ENCODE measurements at regions of chr22 and their contacts with region 1.

Region 1: GRCh38 chr22:39170825-39171622 is 18.5 kb upstream of the CBX7 start:
- DNase-seq: no peak
- H3K4me3 ChIP-seq: peak overlapping the region in 2 of 4 donors; percentile 12 to 28
- H3K27ac ChIP-seq: peak overlapping the region in 2 of 4 donors; percentile 6 to 44
- H3K4me1 ChIP-seq: peaks cover 52 to 57% (median 56%) of the 10 kb centered on the region in 4 donors
- H3K27me3 ChIP-seq: peaks cover 0 to 11% (median 0%) of the 10 kb centered on the region in 4 donors
- CTCF ChIP-seq: peak in 2 of 3 experiments; percentile 98
- EP300 ChIP-seq: no peak
- POLR2A ChIP-seq: no peak

Region 2: DNA sequence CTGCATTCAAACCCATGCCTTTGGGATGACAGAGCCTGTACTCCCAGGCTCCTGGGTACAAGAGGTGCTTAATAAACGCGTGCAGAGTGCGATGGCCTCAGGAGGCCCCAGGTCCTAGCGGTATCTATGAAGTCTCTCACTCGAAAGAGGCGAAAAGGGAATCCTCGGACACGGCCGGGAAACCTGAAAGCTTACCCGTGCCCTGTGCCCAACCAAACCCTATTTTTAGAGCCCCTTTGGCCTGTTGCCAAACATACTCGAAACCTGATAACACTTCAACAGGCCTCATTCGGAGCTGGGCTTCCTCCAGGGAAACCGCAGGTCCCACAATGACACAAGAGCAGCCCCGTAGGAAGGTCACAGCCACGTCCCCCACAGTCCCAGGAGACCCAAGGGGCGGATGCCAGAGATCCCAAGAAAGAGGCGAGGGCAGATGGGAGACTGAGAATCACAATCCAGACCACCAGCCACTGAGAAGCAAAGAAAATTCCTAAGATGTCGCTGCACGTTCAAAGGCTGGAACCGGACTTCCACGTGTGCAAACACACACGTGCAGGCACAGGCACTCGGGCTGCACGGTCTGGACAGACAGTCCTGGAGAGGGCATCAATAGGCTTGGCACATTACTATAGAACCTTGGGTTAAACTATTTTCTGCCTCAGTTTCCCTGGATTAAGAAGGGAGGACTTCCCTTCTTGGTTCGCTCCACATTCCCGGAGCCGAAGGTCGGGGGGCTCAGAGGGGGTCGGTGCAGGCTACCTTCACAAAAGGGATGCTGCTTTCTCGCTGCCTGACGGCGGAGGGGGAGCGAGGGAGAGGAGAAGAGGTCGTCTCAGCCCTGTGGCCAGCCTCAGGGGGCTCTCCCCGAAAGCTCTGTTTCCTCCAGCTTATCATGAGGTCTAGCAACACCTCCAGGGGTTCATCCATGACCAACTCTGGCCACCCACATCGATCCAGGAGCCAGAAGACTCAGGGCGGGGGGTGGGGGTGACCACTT is 65.6 kb after region 1 on chr22:
- intact Hi-C with region 1: no loop called
- DNase-seq: no peak
- H3K4me3 ChIP-seq: no peak overlapping the region
- H3K27ac ChIP-seq: peak overlapping the region; percentile 60 to 80 (median 70)
- H3K4me1 ChIP-seq: peaks cover 86 to 95% (median 90%) of the 10 kb centered on the region in 4 donors
- H3K27me3 ChIP-seq: peaks cover 0 to 44% (median 0%) of the 10 kb centered on the region in 4 donors
- CTCF ChIP-seq: no peak
- EP300 ChIP-seq: no peak
- POLR2A ChIP-seq: no peak

Region 3: GRCh38 chr22:39253435-39254070 is 82.5 kb after region 1 on chr22:
- intact Hi-C with region 1: loop called (anchors 5 kb)
- DNase-seq: peak; percentile 93
- H3K4me3 ChIP-seq: peak overlapping the region in 3 of 4 donors; percentile 14 to 25 (median 17)
- H3K27ac ChIP-seq: peak overlapping the region; percentile 33 to 74 (median 67)
- H3K4me1 ChIP-seq: peaks cover 32 to 44% (median 39%) of the 10 kb centered on the region in 4 donors
- H3K27me3 ChIP-seq: peaks cover 0 to 18% (median 0%) of the 10 kb centered on the region in 4 donors
- CTCF ChIP-seq: no peak
- EP300 ChIP-seq: no peak
- POLR2A ChIP-seq: no peak

Region 4: DNA sequence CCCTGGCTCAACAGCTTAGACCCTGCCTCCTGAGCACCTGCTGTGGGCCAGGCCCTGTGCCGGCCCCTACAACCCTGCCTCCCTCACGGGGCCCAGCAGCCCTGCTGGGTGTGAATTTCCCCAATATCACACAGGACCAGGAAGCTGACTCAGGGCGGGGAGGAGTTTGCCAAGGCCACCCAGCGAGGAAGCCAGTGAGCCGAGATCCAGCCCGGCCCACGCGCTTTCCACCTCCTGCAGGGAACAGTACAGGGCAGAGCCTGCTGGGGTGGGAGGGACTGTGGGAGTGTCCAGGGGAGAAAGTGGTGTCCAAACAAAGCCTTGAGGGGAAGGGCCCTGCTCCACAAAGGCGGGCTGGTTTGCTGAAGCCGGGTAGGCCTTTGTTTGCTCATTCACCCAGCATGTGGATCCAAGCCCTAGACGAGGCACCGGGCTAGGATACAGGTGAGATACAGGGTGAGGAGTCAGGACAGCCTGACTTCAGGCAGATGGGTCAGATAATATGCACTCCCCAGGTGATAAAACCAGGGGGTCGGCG is 121.6 kb after region 1 on chr22:
- intact Hi-C with region 1: no loop called
- DNase-seq: peak; percentile 97
- H3K4me3 ChIP-seq: no peak overlapping the region
- H3K27ac ChIP-seq: peak overlapping the region; percentile 65 to 75 (median 74)
- H3K4me1 ChIP-seq: peaks cover 42 to 44% (median 43%) of the 10 kb centered on the region in 4 donors
- H3K27me3 ChIP-seq: no peaks in the 10 kb centered on the region
- CTCF ChIP-seq: no peak
- EP300 ChIP-seq: no peak
- POLR2A ChIP-seq: no peak

Region 5: DNA sequence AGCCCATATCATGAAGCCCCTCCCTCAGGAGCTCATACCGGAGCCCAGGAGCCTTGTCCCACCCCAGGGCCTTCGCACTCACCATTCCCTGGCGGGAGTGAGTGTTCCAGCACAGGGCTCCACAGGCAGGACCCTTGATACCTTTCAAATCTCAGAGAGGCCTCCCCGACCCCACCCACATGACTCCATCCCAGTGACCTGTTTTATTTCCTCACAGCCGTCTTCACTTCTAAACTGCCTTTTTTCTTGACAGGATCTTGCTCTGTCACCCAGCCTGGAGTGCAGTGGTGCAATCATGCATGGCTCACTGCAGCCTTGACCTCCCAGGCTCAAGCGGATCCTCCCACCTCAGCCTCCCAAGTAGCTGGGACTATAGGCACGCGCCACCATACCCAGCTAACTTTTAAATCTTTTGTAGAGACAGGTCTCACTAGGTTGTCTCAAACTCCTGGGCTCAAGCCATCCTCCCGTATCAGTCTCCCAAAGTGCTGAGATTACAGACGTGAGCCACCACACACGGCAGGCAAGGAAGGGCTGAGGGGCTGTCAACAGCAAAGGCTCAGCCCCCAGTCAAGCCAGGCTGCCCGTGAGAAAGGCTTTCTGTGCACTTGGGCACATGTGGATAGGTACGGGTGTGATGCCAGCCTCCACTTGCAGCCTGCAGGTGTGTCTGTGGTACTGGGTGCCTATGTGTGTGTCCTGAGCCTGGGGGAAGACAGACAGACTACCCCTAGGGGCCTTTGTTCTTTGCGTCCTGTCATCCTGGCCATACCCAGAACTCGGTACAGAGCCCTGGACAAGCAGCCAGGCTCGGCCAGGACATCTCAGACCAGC is 139.1 kb after region 1 on chr22:
- intact Hi-C with region 1: loop called (anchors 2 kb)
- DNase-seq: no peak
- H3K4me3 ChIP-seq: no peak overlapping the region
- H3K27ac ChIP-seq: peak overlapping the region; percentile 70 to 84 (median 76)
- H3K4me1 ChIP-seq: peaks cover 20 to 57% (median 42%) of the 10 kb centered on the region in 4 donors
- H3K27me3 ChIP-seq: no peaks in the 10 kb centered on the region
- CTCF ChIP-seq: no peak
- EP300 ChIP-seq: no peak
- POLR2A ChIP-seq: no peak